A673 (cell line): ENCODE measurements at regions of chr9 and their contacts with region 1.

Region 1: DNA sequence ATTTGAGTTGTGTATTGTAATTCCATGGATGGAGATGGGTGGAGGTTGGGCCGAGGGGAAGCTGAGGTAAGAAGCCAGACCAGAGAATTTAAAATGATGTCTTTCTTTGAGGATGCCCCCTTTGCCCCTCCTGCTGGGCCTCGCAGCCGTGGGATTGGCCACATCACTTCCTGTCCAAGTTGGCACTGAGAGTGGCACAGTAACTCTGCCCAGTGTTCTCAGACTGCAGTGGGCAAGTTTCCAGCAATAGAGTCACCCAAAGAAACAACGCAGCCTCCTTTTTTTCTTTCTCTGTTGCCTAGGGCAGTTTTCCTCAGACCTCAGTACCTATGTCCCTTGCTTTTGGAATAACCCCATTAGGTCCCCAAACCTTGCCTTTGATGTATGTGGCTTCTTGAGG is 306.6 kb upstream of the DMRT1 start:
- DNase-seq: no peak
- H3K4me3 ChIP-seq: no peak overlapping the region
- H3K27ac ChIP-seq: no peak overlapping the region
- H3K4me1 ChIP-seq: no peaks in the 10 kb centered on the region
- H3K27me3 ChIP-seq: peaks cover 5% of the 10 kb centered on the region
- CTCF ChIP-seq: no peak

Region 2: GRCh38 chr9:489198-490197 is 45.4 kb before region 1 on chr9:
- CTCF ChIA-PET with region 1: no interaction called
- POLR2A ChIA-PET with region 1: no interaction called
- intact Hi-C with region 1: no loop called
- DNase-seq: no peak
- H3K4me3 ChIP-seq: no peak overlapping the region
- H3K27ac ChIP-seq: no peak overlapping the region
- H3K4me1 ChIP-seq: no peaks in the 10 kb centered on the region
- H3K27me3 ChIP-seq: peaks cover 5% of the 10 kb centered on the region
- CTCF ChIP-seq: no peak

Region 3: DNA sequence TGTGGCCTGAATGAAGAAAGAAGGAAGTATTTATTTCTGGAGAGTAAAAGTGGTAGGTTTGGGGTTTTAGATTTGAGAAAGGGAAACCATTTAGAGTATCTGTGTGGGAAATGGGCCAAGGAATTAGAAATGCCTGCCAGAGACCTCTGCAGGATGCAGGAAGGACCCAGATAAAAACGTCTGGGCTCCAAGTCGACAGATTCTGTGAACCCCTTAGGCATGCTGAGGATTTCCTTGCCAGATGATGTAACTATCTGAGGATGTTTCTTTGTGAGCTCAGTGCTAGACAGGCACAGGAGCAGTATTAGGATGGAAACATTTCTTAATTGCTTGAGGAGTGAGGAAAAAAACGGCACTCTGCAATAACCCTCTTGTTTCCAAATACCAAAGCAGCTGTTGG is 54.8 kb after region 1 on chr9:
- CTCF ChIA-PET with region 1: no interaction called
- POLR2A ChIA-PET with region 1: no interaction called
- intact Hi-C with region 1: loop called (anchors 5 kb)
- DNase-seq: no peak
- H3K4me3 ChIP-seq: no peak overlapping the region
- H3K27ac ChIP-seq: no peak overlapping the region
- H3K4me1 ChIP-seq: no peaks in the 10 kb centered on the region
- H3K27me3 ChIP-seq: peaks cover 27% of the 10 kb centered on the region
- CTCF ChIP-seq: no peak